ENCODE measurements at regions of chr11 and their contacts with region 1.

Region 1: GRCh38 chr11:19903620-19904069 is 191.0 kb downstream of the NAV2 start:
- DNase-seq: peak; percentile 60
- H3K4me3 ChIP-seq: no peak overlapping the region
- H3K27ac ChIP-seq: no peak overlapping the region
- H3K4me1 ChIP-seq: no peaks in the 10 kb centered on the region
- CTCF ChIP-seq: peak; percentile 88

Region 2: GRCh38 chr11:19561011-19561410 is 342.6 kb before region 1 on chr11:
- CTCF ChIA-PET with region 1: no interaction called
- POLR2A ChIA-PET with region 1: no interaction called
- intact Hi-C with region 1: loop called (anchors 1 kb)
- DNase-seq: no peak
- H3K4me3 ChIP-seq: no peak overlapping the region
- H3K27ac ChIP-seq: no peak overlapping the region
- H3K4me1 ChIP-seq: no peaks in the 10 kb centered on the region
- CTCF ChIP-seq: no peak